ENCODE measurements at regions of chr6 and their contacts with region 1.

Region 1: DNA sequence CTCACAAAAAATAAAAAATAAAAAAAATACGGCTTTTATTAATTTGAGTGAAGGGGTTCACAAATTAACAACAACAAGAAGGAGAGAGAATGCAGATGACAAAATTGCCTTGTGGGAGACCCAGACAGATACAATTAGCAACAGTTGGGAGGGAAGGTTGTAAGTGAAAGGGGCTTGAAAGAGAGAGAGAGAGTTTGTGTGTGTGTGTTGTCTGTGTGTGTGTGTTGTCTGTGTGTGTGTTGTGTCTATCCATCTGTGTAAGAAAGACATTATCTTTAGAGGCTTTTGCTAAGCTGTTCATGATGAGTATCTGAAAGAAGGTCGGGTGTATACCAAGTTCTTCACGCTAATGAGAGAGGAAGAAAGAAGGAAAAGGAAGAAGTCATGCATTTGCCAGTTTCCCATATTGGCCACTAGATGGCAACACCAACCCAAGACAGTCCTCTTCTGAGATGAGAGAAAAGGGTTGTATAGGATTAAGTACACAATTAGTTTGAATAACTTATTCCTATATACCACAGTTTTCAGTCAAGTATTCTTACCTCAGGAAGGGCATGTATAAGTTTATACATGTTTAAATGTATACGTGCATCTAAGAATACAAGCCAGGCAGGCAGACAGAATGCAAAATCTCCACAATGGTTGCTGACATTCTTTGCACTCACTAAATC is 63.7 kb upstream of the CD2AP start:
- DNase-seq: no peak
- H3K4me3 ChIP-seq: peak overlapping the region; percentile 25 to 66 (median 36)
- H3K27ac ChIP-seq: peak overlapping the region in 4 of 8 donors; percentile 37 to 77 (median 63)
- H3K4me1 ChIP-seq: peaks cover 0 to 25% (median 13%) of the 10 kb centered on the region in 6 donors
- H3K27me3 ChIP-seq: no peaks in the 10 kb centered on the region
- CTCF ChIP-seq: peak; percentile 76 to 92 (median 88)
- POLR2A ChIP-seq: no peak

Region 2: GRCh38 chr6:46772762-46773161 is 641.1 kb before region 1 on chr6:
- intact Hi-C with region 1: no loop called
- DNase-seq: no peak
- H3K4me3 ChIP-seq: peak overlapping the region in 1 of 8 donors; percentile 52
- H3K27ac ChIP-seq: peak overlapping the region in 7 of 8 donors; percentile 11 to 85 (median 76)
- H3K4me1 ChIP-seq: peaks cover 0 to 28% (median 8%) of the 10 kb centered on the region in 6 donors
- H3K27me3 ChIP-seq: no peaks in the 10 kb centered on the region
- CTCF ChIP-seq: no peak
- POLR2A ChIP-seq: no peak

Region 3: GRCh38 chr6:47587493-47587892 is 173.6 kb after region 1 on chr6:
- intact Hi-C with region 1: no loop called
- DNase-seq: no peak
- H3K4me3 ChIP-seq: no peak overlapping the region
- H3K27ac ChIP-seq: no peak overlapping the region
- H3K4me1 ChIP-seq: no peaks in the 10 kb centered on the region
- H3K27me3 ChIP-seq: no peaks in the 10 kb centered on the region
- CTCF ChIP-seq: no peak
- POLR2A ChIP-seq: no peak

Region 4: GRCh38 chr6:47621838-47622449 is 208.1 kb after region 1 on chr6:
- intact Hi-C with region 1: loop called (anchors 10 kb)
- DNase-seq: no peak
- H3K4me3 ChIP-seq: no peak overlapping the region
- H3K27ac ChIP-seq: no peak overlapping the region
- H3K4me1 ChIP-seq: no peaks in the 10 kb centered on the region
- H3K27me3 ChIP-seq: no peaks in the 10 kb centered on the region
- CTCF ChIP-seq: no peak
- POLR2A ChIP-seq: no peak

Region 5: DNA sequence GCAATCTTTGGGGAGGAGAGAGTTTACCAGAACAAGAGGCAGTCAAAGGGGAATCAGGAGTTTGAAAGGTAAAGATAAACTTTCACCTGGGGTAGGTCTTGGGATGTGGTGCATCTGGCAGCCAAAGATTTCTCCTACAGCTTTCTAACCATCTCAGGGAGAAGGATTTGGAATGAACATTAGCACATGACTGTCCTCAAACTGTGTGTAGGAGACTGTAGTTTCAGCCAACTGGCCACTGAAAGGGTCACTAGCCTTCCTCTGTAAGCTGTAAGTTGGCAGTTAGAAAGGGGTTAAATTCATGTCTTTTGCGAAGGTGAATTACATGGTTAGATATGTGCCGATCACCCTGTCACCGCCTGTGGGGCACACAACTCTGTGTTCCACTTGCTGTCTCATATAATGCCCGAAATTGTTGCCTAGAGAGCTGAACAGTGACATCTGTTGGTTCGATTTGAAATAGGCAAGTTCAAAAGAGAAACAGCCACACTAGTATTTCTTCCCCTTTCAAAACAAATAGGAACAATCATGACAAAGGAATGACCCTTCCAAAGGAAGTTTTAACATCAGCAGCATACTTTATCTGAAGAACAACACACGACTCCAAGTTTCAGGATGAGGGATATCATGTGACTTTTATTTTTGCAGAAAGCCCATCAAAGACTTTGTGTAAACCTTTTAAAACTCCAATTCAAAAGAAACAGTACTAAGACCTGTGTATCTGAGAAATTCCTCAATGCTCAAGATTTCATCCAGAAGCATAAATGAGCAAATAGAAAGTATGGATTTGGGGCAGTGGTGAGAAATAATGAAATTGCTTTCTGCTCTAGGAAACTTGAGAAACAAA is 366.8 kb after region 1 on chr6:
- intact Hi-C with region 1: loop called (anchors 5 kb)
- DNase-seq: no peak
- H3K4me3 ChIP-seq: no peak overlapping the region
- H3K27ac ChIP-seq: no peak overlapping the region
- H3K4me1 ChIP-seq: peaks cover 0 to 8% (median 0%) of the 10 kb centered on the region in 6 donors
- H3K27me3 ChIP-seq: peaks cover 0 to under 1% (median 0%) of the 10 kb centered on the region in 7 donors
- CTCF ChIP-seq: peak in 10 of 11 experiments; percentile 9 to 69 (median 54)
- POLR2A ChIP-seq: no peak

Measured in spleen (tissue), 13 donors.